ENCODE measurements at regions of chr6 and their contacts with region 1.

Region 1: GRCh38 chr6:391559-392440 is at the start of gene IRF4:
- DNase-seq: peak in 6 of 9 donors; percentile 20 to 87 (median 32)
- ATAC-seq: peak; percentile 66
- H3K4me3 ChIP-seq: peak within 1 kb of the TSS; percentile 72
- H3K4me3 Mint-ChIP-seq: peak within 1 kb of the TSS; percentile 88 to 100 (median 96)
- H3K27ac ChIP-seq: peak within 1 kb of the TSS; percentile 60
- H3K27ac Mint-ChIP-seq: peak within 1 kb of the TSS in 8 of 9 donors; percentile 21 to 98 (median 69)
- H3K4me1 ChIP-seq: peaks cover 13 to 16% of the 10 kb centered on the region in 2 donors
- H3K4me1 Mint-ChIP-seq: peaks cover 20 to 56% (median 31%) of the 10 kb centered on the region in 7 donors
- H3K27me3 ChIP-seq: no peaks in the 10 kb centered on the region
- H3K27me3 Mint-ChIP-seq: peaks cover 0 to 24% (median 3%) of the 10 kb centered on the region in 5 donors
- total RNA-seq, gene IRF4: 11.8 to 175 (median 27.1) TPM

Region 2: DNA sequence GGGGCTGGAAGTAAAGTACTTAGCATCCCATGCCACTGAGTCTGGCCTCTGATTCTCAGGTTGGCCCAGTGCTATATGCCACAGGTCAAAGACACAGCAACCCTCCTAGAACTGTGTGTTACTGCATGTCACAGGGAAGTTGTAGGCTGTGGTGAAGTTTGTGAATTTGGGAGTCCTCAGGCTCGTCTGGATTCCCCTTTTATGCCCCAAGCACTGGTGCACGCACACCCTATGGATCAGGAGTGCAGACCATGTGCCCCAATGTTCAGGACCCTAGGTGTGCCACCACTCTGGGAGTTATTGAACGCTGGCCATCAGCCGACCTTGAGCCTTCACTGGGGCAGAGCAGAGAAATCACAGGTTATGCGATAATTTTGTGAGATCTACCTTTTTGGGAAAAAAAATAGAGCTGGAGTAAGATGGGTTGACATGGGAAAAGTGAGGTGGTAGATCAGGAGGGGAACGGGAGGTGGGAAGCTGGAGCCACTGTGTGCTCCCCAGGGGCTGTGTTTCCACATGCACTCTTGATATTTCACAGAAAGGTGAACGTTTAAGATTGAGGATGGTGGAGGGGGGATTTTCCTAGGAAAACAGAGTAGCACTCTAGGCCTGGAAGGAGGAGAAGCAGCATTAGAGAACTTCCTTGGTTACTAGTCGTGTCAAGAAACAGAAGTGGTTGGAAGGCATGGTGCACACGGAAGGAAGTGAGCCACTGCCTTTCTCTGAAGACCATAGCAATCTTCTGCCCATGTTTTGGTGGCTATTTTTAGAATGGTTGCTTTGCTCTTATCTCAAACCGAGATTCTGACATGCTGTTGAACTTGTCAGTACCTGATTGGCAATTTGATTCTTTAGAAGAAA is 55.4 kb before region 1 on chr6:
- CTCF ChIA-PET with region 1: no interaction called
- POLR2A ChIA-PET with region 1: interaction called, 4 read pairs
- intact Hi-C with region 1: loop called in 1 of 2 experiments (anchors 2 kb)
- DNase-seq: peak in 2 of 9 donors; percentile 13 to 18
- ATAC-seq: peak; percentile 58
- H3K4me3 ChIP-seq: no peak overlapping the region
- H3K4me3 Mint-ChIP-seq: peak overlapping the region; percentile 2 to 74 (median 42)
- H3K27ac ChIP-seq: no peak overlapping the region
- H3K27ac Mint-ChIP-seq: peak overlapping the region in 7 of 9 donors; percentile 18 to 87 (median 60)
- H3K4me1 ChIP-seq: peaks cover 21 to 28% of the 10 kb centered on the region in 2 donors
- H3K4me1 Mint-ChIP-seq: peaks cover 28 to 54% (median 52%) of the 10 kb centered on the region in 7 donors
- H3K27me3 ChIP-seq: no peaks in the 10 kb centered on the region
- H3K27me3 Mint-ChIP-seq: no peaks in the 10 kb centered on the region

Region 3: GRCh38 chr6:490251-491037 is 98.6 kb after region 1 on chr6:
- CTCF ChIA-PET with region 1: interaction called, 4 read pairs
- POLR2A ChIA-PET with region 1: interaction called, 5 read pairs
- intact Hi-C with region 1: loop called in 1 of 2 experiments (anchors 1 kb)
- DNase-seq: no peak
- ATAC-seq: peak; percentile 47
- H3K4me3 ChIP-seq: peak overlapping the region; percentile 25
- H3K4me3 Mint-ChIP-seq: peak overlapping the region; percentile 19 to 87 (median 70)
- H3K27ac ChIP-seq: no peak overlapping the region
- H3K27ac Mint-ChIP-seq: peak overlapping the region; percentile 54 to 98 (median 84)
- H3K4me1 ChIP-seq: peaks cover 60 to 65% of the 10 kb centered on the region in 2 donors
- H3K4me1 Mint-ChIP-seq: peaks cover 46 to 78% (median 70%) of the 10 kb centered on the region in 7 donors
- H3K27me3 ChIP-seq: no peaks in the 10 kb centered on the region
- H3K27me3 Mint-ChIP-seq: no peaks in the 10 kb centered on the region

Region 4: GRCh38 chr6:551405-551804 is 159.6 kb after region 1 on chr6:
- CTCF ChIA-PET with region 1: interaction called, 3 read pairs
- POLR2A ChIA-PET with region 1: interaction called, 7 read pairs
- intact Hi-C with region 1: loop called (anchors 2 kb)
- DNase-seq: no peak
- ATAC-seq: peak; percentile 24
- H3K4me3 ChIP-seq: no peak overlapping the region
- H3K4me3 Mint-ChIP-seq: no peak overlapping the region
- H3K27ac ChIP-seq: no peak overlapping the region
- H3K27ac Mint-ChIP-seq: peak overlapping the region in 2 of 9 donors; percentile 7 to 22
- H3K4me1 ChIP-seq: peaks cover 4 to 13% of the 10 kb centered on the region in 2 donors
- H3K4me1 Mint-ChIP-seq: peaks cover 5 to 48% (median 12%) of the 10 kb centered on the region in 7 donors
- H3K27me3 ChIP-seq: no peaks in the 10 kb centered on the region
- H3K27me3 Mint-ChIP-seq: no peaks in the 10 kb centered on the region

Region 5: GRCh38 chr6:692855-693722 is 301.3 kb after region 1 on chr6 and contains the start of gene EXOC2:
- CTCF ChIA-PET with region 1: no interaction called
- POLR2A ChIA-PET with region 1: no interaction called
- intact Hi-C with region 1: loop called (anchors 2 to 5 kb)
- DNase-seq: peak; percentile 70 to 88 (median 81)
- ATAC-seq: peak; percentile 93
- H3K4me3 ChIP-seq: peak within 1 kb of the TSS; percentile 87
- H3K4me3 Mint-ChIP-seq: peak within 1 kb of the TSS; percentile 92 to 96 (median 95)
- H3K27ac ChIP-seq: peak within 1 kb of the TSS; percentile 83
- H3K27ac Mint-ChIP-seq: peak within 1 kb of the TSS; percentile 84 to 92 (median 91)
- H3K4me1 ChIP-seq: peaks cover 14 to 20% of the 10 kb centered on the region in 2 donors
- H3K4me1 Mint-ChIP-seq: peaks cover 23 to 45% (median 29%) of the 10 kb centered on the region in 7 donors
- H3K27me3 ChIP-seq: no peaks in the 10 kb centered on the region
- H3K27me3 Mint-ChIP-seq: no peaks in the 10 kb centered on the region
- total RNA-seq, gene EXOC2: 26.7 to 40.6 (median 38.8) TPM

Region 6: DNA sequence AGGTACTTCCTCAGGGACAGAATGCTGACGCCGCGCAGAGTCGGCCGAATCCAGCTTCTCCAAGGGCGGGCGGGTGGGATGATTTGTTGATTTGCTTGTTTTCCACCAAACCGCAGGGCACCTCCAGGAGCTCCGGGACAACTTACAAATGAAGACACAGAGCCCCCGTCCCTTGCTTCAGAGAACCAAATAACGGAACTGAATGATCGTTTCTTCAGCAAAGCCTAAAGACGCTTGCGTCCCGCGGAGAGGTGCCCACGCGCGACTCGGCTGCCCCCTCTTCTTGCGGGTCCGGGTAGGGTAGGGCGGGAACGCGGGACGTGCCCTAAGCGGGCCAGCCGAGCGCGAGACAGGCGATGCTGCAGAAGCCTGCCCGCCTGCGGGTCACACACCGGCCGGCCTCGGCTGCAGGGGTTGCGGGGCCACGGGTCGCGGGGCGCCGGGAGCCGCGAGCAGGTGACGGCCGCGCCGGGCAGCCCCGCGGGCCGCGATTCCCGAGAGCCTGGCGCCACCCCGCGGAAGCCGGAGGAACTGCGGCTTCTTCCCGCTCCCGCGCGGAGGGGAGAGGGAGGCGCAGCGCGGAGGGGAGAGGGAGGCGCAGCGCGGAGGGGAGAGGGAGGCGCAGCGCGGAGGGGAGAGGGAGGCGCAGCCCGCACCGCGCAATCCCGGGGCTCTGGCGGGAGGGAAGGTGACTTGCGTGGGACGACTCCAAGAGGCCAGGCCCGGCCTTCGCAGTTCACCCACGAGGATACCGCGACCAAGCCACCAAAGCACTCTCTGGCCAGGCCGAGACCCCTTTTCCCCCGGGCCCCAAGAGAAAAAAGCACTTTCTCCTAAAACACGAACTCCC is 989.9 kb after region 1 on chr6:
- CTCF ChIA-PET with region 1: no interaction called
- POLR2A ChIA-PET with region 1: no interaction called
- intact Hi-C with region 1: loop called in 1 of 2 experiments (anchors 5 kb)
- DNase-seq: peak in 8 of 9 donors; percentile 7 to 77 (median 49)
- ATAC-seq: peak; percentile 78
- H3K4me3 ChIP-seq: no peak overlapping the region
- H3K4me3 Mint-ChIP-seq: peak overlapping the region; percentile 31 to 75 (median 52)
- H3K27ac ChIP-seq: no peak overlapping the region
- H3K27ac Mint-ChIP-seq: no peak overlapping the region
- H3K4me1 ChIP-seq: peaks cover 0 to 16% of the 10 kb centered on the region in 2 donors
- H3K4me1 Mint-ChIP-seq: peaks cover 21 to 50% (median 37%) of the 10 kb centered on the region in 7 donors
- H3K27me3 ChIP-seq: peaks cover 8 to 20% of the 10 kb centered on the region in 2 donors
- H3K27me3 Mint-ChIP-seq: peaks cover 54 to 81% (median 57%) of the 10 kb centered on the region in 5 donors